ENCODE measurements at regions of chr6 and their contacts with region 1.

Region 1: DNA sequence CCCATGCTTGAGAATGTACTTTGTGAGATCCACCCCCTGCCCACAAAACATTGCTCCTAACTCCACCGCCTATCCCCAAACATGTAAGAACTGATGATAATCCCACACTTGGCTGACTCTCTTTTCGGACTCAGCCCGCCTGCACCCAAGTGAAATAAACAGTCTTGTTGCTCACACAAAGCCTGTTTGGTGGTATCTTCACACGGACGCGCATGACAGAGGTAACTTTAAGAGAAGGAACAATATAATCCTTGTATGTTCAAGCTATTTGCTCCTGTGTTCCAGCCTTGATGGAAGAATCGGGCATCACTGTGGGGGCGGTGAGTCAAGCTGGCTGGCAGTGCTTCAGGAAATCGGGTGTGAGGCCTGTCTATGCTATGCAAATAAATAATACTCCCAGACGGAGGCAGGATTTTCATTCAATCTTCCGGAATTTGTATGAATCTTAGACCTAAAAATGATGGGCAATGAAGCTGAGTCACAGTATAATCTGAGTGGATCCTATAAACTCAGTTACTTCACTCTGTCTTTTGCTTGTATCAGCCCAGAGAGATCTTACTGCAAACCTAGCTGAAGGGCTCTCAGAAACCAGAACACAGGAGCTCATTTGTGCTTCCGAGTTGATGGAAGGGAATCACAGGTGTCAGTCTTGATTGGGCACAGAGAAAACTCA is 45.2 kb upstream of the NT5E start:
- DNase-seq: peak; percentile 90
- H3K4me3 ChIP-seq: no peak overlapping the region; the same call in 1 of the 2 replicates
- CTCF ChIP-seq: no peak

Region 2: DNA sequence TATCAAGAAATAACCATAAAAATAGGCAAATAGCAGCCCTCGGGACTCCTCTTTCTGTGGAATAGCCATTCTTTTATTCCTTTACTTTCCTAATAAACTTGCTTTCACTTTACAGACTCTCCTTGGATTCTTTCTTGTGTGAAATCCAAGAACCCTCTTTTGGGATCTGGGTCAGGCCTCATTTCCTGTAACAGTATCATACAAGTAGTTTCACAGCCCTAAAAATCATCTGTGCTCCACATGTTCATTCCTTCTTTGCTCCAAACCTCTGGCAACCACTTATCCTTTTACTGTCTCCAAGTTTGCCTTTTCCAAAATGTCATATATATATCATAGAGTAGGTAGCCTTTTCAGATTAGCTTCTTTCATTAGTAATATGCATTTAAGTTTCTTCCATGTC is 31.8 kb after region 1 on chr6:
- CTCF ChIA-PET with region 1: no interaction called
- POLR2A ChIA-PET with region 1: no interaction called
- DNase-seq: peak; percentile 52
- H3K4me3 ChIP-seq: no peak overlapping the region
- CTCF ChIP-seq: no peak

Region 3: GRCh38 chr6:85449818-85450759 is 45.5 kb after region 1 on chr6 and contains the start of gene NT5E:
- CTCF ChIA-PET with region 1: interaction called, 9 read pairs
- POLR2A ChIA-PET with region 1: interaction called, 86 read pairs
- DNase-seq: no peak
- H3K4me3 ChIP-seq: peak within 1 kb of the TSS; percentile 78
- CTCF ChIP-seq: peak; percentile 9

Measured in AG04449 (cell line).